Right ventricle myocardium inferior (tissue), 1 donor: ENCODE measurements at regions of chr7 and their contacts with region 1.

Region 1: GRCh38 chr7:120857588-120858573 is at the start of gene TSPAN12:
- DNase-seq: peak; percentile 91
- ATAC-seq: peak; percentile 96
- total RNA-seq, gene TSPAN12: 61.4 TPM

Region 2: GRCh38 chr7:120792091-120792860 is 65.6 kb before region 1 on chr7:
- intact Hi-C with region 1: loop called (anchors 5 kb)
- DNase-seq: peak; percentile 78
- ATAC-seq: peak; percentile 78

Region 3: GRCh38 chr7:120805636-120806388 is 52.1 kb before region 1 on chr7:
- intact Hi-C with region 1: loop called (anchors 1 kb)
- DNase-seq: no peak
- ATAC-seq: no peak

Region 4: GRCh38 chr7:120950539-120951308 is 92.8 kb after region 1 on chr7 and contains the start of gene ING3:
- intact Hi-C with region 1: loop called (anchors 2 kb)
- DNase-seq: peak; percentile 97
- ATAC-seq: peak; percentile 99
- total RNA-seq, gene ING3: 14.1 TPM